Activated CD4-positive, alpha-beta memory T cell treated with anti-CD3 and anti-CD28 coated beads, Interleukin-2, amount 10 ng/mL, durations not matched to agents 7 days and 5 days (primary cell): ENCODE measurements at regions of chr1 and their contacts with region 1.

Region 1: GRCh38 chr1:23344111-23344986 is at the start of gene HNRNPR:
- DNase-seq: peak; percentile 99
- H3K4me3 Mint-ChIP-seq: peak within 1 kb of the TSS; percentile 82
- H3K27ac Mint-ChIP-seq: peak within 1 kb of the TSS; percentile 92
- H3K4me1 Mint-ChIP-seq: peaks cover 38% of the 10 kb centered on the region
- H3K27me3 Mint-ChIP-seq: no peaks in the 10 kb centered on the region
- total RNA-seq, gene HNRNPR: 175 to 179 TPM

Region 2: DNA sequence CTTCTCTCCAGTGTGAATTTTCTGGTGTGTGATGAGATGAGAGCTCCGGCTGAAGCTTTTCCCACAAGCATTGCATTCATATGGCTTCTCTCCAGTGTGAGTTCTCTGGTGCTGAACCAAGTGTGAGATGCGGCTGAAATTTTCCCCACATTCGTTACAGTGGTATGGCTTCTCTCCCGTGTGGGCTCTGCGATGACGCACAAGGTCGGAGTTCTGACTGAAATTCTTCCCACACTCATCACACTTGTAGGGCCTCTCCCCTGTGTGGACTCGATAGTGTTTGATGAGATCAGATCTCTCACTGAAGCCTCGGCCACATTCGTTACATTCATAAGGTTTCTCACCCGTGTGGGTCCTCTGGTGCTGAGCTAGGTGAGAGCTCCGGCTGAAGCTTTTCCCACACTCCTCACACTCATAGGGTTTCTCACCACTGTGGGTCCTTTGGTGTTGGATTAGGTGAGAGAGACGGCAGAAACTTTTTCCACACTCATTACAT is 17.9 kb after region 1 on chr1:
- CTCF ChIA-PET with region 1: interaction called, 14 read pairs
- POLR2A ChIA-PET with region 1: interaction called, 60 read pairs
- DNase-seq: no peak
- H3K4me3 Mint-ChIP-seq: no peak overlapping the region
- H3K27ac Mint-ChIP-seq: no peak overlapping the region
- H3K4me1 Mint-ChIP-seq: peaks cover 11% of the 10 kb centered on the region
- H3K27me3 Mint-ChIP-seq: no peaks in the 10 kb centered on the region

Region 3: GRCh38 chr1:23367791-23368561 is 23.6 kb after region 1 on chr1:
- CTCF ChIA-PET with region 1: interaction called, 14 read pairs
- POLR2A ChIA-PET with region 1: interaction called, 60 read pairs
- DNase-seq: peak; percentile 99
- H3K4me3 Mint-ChIP-seq: peak overlapping the region; percentile 98
- H3K27ac Mint-ChIP-seq: peak overlapping the region; percentile 99
- H3K4me1 Mint-ChIP-seq: peaks cover 31% of the 10 kb centered on the region
- H3K27me3 Mint-ChIP-seq: no peaks in the 10 kb centered on the region

Region 4: GRCh38 chr1:23403735-23404486 is 59.6 kb after region 1 on chr1:
- CTCF ChIA-PET with region 1: interaction called, 6 read pairs
- POLR2A ChIA-PET with region 1: interaction called, 10 read pairs
- DNase-seq: peak; percentile 87
- H3K4me3 Mint-ChIP-seq: no peak overlapping the region
- H3K27ac Mint-ChIP-seq: no peak overlapping the region
- H3K4me1 Mint-ChIP-seq: peaks cover 18% of the 10 kb centered on the region
- H3K27me3 Mint-ChIP-seq: no peaks in the 10 kb centered on the region